OCI-LY7 (cell line): ENCODE measurements at regions of chr5 and their contacts with region 1.

Region 1: DNA sequence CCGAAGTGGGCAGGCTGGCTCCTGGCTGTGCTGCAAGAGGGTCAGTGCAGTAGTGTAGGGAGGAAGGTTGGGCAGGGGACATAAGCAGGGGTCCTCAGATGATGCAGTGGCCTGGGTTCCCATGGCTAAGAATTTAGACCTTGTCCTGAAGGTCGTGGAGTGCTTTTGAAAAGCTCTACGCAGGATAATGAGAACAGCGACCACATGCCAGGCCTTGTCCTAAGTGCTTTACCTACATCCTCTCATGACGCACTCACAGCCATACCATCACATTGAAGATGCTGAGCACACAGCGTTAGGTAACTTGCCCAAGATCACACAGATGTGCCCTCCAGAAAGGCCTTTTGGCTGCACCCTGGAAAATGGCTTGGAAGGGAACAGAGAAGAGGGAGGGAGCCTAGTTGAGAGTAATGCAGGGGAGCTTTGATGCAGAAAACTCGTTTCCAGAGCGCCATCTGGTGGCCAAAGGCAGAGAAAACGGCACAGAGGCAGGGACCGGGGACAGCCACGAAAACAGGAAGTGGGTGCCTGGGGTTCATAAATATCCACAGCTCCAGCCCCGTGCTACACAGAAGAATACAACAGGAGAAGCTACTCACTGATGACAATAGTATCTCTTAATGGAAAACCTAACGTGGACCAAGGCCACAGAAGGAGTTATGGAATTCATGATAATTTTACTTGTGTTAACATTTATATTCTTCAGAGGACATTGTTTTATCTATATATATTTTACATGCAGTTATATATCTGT is 2.6 kb upstream of the PCDH12 start:
- DNase-seq: peak; percentile 94
- H3K4me3 ChIP-seq: peak overlapping the region; percentile 32
- H3K27ac ChIP-seq: peak overlapping the region; percentile 27
- H3K4me1 ChIP-seq: peaks cover 42% of the 10 kb centered on the region
- CTCF ChIP-seq: peak; percentile 92

Region 2: GRCh38 chr5:141664732-141665461 is 295.7 kb before region 1 on chr5:
- CTCF ChIA-PET with region 1: interaction called, 3 read pairs
- POLR2A ChIA-PET with region 1: interaction called, 3 read pairs
- intact Hi-C with region 1: loop called (anchors 1 kb)
- DNase-seq: peak; percentile 80
- H3K4me3 ChIP-seq: no peak overlapping the region
- H3K27ac ChIP-seq: no peak overlapping the region
- H3K4me1 ChIP-seq: no peaks in the 10 kb centered on the region
- CTCF ChIP-seq: peak; percentile 96

Region 3: DNA sequence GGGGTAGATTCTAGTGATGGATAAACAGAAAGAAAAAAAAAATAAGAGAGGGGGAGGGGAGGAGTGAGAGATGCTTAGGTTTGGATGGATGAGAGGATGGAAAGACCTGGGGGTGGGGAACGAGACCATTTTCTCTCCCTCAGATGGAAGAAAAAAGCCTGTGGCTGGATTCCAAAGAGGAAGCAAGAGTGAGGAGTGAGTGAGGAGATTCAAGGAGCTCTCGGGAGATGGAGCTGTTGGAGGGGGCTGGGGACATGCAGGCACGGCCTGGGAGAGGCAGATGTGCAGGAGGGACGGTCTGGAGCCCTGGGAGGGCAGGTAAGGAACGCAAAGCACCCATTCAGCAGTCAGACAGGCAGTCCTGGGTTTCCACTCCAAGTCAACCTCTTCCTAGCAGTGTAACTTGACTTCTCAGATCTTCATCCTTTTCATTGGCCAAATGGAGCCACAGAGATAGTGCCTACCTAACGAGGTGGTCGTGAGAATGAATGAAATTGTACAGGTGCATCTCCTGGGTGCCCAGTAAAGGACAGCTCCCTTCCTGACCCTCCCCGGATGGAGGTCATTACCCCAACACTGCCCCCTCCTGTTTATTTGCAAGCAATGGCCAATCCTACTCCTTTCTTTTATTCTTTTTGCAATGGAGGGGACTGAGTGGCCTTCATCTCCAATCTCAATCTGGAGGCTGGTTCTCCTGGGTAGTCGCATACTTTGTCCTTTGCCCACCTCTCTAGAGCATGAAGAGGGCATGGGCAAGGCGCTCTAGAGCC is 134.7 kb before region 1 on chr5:
- CTCF ChIA-PET with region 1: no interaction called
- POLR2A ChIA-PET with region 1: no interaction called
- intact Hi-C with region 1: no loop called
- DNase-seq: no peak
- H3K4me3 ChIP-seq: no peak overlapping the region
- H3K27ac ChIP-seq: no peak overlapping the region
- H3K4me1 ChIP-seq: no peaks in the 10 kb centered on the region
- CTCF ChIP-seq: peak; percentile 68

Region 4: DNA sequence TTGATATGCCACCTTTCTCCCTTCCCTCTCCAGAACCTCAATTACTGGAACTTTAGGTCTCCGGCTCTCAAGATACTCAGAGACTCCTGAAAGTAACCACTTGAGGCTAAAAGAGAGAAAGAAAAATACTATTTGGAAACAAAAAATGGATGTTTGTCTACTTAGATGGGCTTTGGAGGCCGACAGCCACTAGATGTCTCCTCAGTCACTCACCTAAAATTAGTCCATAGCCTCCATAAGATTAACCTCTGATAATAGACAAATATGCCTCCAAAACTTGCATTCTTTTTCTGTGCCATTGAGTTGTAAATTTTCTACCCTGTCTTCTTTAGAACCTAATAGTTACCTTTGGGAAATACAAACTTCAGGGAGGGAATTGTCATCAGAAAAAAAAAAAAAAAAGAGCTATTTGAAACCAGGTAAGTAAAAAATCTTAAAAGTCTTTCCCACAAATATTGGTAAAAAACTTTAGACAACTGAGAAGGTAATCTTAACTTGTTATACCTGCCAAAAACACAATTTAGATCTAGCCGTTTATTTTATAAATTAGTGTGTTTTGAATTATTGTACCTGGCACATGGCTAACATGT is 71.2 kb before region 1 on chr5:
- CTCF ChIA-PET with region 1: interaction called, 15 read pairs
- POLR2A ChIA-PET with region 1: interaction called, 4 read pairs
- intact Hi-C with region 1: loop called (anchors 1 kb)
- DNase-seq: peak; percentile 43
- H3K4me3 ChIP-seq: no peak overlapping the region
- H3K27ac ChIP-seq: no peak overlapping the region
- H3K4me1 ChIP-seq: no peaks in the 10 kb centered on the region
- CTCF ChIP-seq: peak; percentile 83

Region 5: DNA sequence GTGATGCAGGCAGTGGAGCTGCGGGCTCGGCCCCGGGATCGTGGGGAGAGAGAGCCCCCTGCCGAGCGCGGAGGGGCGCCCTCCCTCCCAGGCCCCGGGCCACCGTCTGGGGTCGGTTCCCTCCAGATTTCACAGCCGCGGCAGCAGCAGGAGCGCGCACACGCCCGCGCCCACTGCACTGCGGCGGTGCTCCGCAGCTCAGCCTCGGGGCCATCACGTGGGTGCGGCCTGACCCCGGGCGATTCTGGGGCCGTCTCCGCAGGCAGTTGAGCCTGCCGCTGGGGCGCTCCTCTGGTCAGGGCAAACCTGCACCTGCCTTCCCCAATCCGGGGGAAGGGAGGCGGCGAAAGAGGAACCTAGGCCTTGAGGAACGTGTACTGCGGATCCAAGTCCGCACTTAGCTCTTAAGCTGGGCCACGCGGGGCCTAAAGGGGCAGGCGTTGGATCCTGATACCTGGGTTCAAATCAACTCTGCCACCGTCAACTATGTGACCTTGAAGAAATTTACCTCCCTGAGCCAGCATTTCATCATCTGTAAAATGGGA is 46.4 kb before region 1 on chr5:
- CTCF ChIA-PET with region 1: interaction called, 19 read pairs
- POLR2A ChIA-PET with region 1: interaction called, 7 read pairs
- intact Hi-C with region 1: loop called (anchors 1 kb)
- DNase-seq: peak; percentile 31
- H3K4me3 ChIP-seq: peak overlapping the region; percentile 5
- H3K27ac ChIP-seq: no peak overlapping the region
- H3K4me1 ChIP-seq: peaks cover 36% of the 10 kb centered on the region
- CTCF ChIP-seq: peak; percentile 66